Activated T-helper 2 cell treated with anti-CD3 and anti-CD28 coated beads, Interferon-gamma antibody, Interleukin-2, Interleukin-4, amounts not matched to agents 10 μg/mL and 5 μg/mL and 100 μg/mL, durations not matched to agents 14 hours and 24 hours and 36 hours (primary cell): ENCODE measurements at regions of chr3 and their contacts with region 1.

Region 1: DNA sequence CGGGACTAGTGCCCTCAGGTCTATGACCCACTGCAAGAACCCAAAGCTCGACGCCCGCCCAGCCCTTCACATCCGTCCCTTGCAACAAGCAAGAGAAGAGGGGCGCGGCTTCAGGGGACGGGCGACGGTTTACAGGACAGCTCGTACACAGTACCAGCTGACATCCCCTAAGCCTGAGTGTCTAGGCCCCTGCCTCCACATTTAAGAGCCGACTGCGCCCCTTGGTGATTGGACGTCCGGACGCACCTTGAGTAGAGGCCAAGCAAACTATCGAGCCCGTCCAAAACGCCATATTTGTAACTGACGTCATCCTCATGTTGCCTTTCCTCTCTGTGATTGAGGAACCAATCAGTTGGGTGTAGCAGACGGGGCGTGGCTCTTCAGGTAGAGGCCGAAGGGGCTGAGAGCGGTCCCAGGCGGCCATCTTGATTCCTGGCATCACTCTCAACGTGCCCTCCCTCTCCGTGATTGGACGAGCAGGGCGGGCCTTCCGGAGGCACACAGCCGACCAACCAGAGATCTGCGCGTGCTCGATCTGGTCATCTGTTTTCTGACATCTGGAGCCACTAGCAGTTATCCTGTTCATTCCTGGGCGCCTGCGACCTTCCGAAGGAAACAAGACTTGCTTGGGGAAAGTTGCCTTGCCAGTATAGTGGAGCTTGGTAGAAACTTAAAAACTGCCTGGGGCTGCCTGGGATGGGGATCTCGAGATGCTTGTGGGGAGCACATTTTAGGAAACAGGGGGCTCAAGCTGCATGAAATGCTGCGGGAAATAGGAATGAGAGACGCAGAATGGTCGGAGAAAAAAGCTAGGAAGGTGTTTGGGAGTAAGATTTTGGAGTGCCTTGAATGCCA is 4.0 kb upstream of the RPL14 start:
- DNase-seq: peak; percentile 96
- H3K4me3 Mint-ChIP-seq: peak overlapping the region; percentile 90
- H3K27ac Mint-ChIP-seq: peak overlapping the region; percentile 97
- H3K4me1 Mint-ChIP-seq: peaks cover 24% of the 10 kb centered on the region
- H3K27me3 Mint-ChIP-seq: no peaks in the 10 kb centered on the region

Region 2: GRCh38 chr3:40309418-40309924 is 143.6 kb before region 1 on chr3 and contains the start of gene EIF1B:
- intact Hi-C with region 1: loop called (anchors 1 kb)
- DNase-seq: peak; percentile 98
- H3K4me3 Mint-ChIP-seq: peak within 1 kb of the TSS; percentile 100
- H3K27ac Mint-ChIP-seq: peak within 1 kb of the TSS; percentile 97
- H3K4me1 Mint-ChIP-seq: peaks cover 20% of the 10 kb centered on the region
- H3K27me3 Mint-ChIP-seq: no peaks in the 10 kb centered on the region
- total RNA-seq, gene EIF1B: 42.3 and 48.1 TPM in 2 replicates

Region 3: GRCh38 chr3:40476478-40477470 is 23.7 kb after region 1 on chr3 and contains the start of gene ZNF619:
- intact Hi-C with region 1: loop called (anchors 1 kb)
- DNase-seq: peak; percentile 49
- H3K4me3 Mint-ChIP-seq: peak within 1 kb of the TSS; percentile 83
- H3K27ac Mint-ChIP-seq: peak within 1 kb of the TSS; percentile 81
- H3K4me1 Mint-ChIP-seq: peaks cover 13% of the 10 kb centered on the region
- H3K27me3 Mint-ChIP-seq: peaks cover 3% of the 10 kb centered on the region
- total RNA-seq, gene ZNF619: 7.8 and 9.1 TPM in 2 replicates

Region 4: GRCh38 chr3:41198950-41199865 is 746.1 kb after region 1 on chr3 and contains the start of gene CTNNB1:
- intact Hi-C with region 1: loop called (anchors 2 kb)
- DNase-seq: peak; percentile 89
- H3K4me3 Mint-ChIP-seq: peak within 1 kb of the TSS; percentile 99
- H3K27ac Mint-ChIP-seq: peak within 1 kb of the TSS; percentile 98
- H3K4me1 Mint-ChIP-seq: peaks cover 35% of the 10 kb centered on the region
- H3K27me3 Mint-ChIP-seq: peaks cover 22% of the 10 kb centered on the region
- total RNA-seq, gene CTNNB1: 230 and 238 TPM in 2 replicates

Region 5: DNA sequence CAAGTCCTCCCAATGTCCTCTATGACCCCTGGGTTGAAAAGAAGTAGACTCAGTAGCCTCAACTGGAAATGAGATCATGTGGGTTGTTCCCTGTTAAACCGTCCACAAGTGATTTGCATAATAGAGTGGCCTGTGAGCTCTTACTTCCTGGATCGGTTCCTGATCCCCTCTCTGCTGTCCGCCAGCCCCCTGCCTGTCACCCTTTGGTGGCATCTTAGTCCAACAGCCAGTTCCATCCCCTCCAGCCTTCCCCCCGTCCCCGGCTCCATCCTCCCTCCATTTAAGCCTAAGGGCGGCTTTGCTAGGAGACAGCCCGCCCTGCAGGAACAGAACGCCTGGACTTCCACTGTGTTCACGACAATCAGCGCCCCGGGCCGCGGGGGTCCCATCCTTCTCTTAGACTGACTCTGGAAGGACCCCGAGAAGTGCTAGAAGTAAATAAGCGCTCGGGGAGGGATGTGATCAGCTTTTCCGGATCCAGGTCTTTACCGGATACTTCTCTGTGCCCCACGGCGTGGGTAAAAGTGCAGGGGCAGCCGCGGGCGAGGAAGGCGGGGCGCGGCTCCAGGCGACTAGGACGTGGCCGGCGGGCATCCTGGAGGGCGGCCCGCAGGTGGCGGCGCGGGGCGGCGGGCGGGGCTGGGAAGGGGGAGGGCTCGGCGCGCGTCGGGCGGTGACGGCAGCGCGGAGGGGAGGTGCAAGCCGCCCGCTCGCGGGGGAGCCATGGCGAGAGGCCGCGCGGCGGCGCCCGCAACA is 1560.0 kb after region 1 on chr3:
- intact Hi-C with region 1: loop called (anchors 2 kb)
- DNase-seq: peak; percentile 61
- H3K4me3 Mint-ChIP-seq: peak overlapping the region; percentile 88
- H3K27ac Mint-ChIP-seq: peak overlapping the region; percentile 96
- H3K4me1 Mint-ChIP-seq: peaks cover 41% of the 10 kb centered on the region
- H3K27me3 Mint-ChIP-seq: no peaks in the 10 kb centered on the region